Activated CD8-positive, alpha-beta T cell treated with anti-CD3 and anti-CD28 coated beads for 36 hours (primary cell): ENCODE measurements at regions of chr18 and their contacts with region 1.

Region 1: GRCh38 chr18:31555971-31556747 is 35.5 kb upstream of the TTR start:
- DNase-seq: peak; percentile 49
- ATAC-seq: peak; percentile 58
- H3K4me3 Mint-ChIP-seq: no peak overlapping the region
- H3K27ac Mint-ChIP-seq: no peak overlapping the region
- H3K4me1 Mint-ChIP-seq: no peaks in the 10 kb centered on the region
- H3K27me3 Mint-ChIP-seq: peaks cover 3% of the 10 kb centered on the region
- CTCF ChIP-seq: peak; percentile 80

Region 2: DNA sequence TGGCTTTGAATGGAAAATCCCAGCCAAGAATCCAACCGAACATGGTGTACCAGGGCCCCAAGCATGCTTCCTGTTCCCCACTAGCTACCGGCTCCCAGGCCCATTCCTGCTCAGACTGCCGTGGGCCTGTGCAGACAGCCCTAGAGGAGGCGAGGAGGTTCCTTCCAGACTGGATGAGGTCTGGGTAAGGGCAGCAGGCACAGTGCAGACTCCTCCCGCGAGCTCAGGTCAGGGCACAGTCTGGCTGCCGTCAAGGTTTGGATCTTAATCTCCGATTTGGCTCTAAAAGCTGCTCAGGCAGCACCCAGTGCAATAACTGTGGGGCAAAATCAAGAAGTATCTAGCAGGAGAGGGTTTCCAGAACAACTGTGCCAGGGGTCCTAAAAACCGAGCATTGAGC is 16.2 kb after region 1 on chr18:
- CTCF ChIA-PET with region 1: interaction called, 15 read pairs
- POLR2A ChIA-PET with region 1: no interaction called
- intact Hi-C with region 1: no loop called
- DNase-seq: no peak
- ATAC-seq: no peak
- H3K4me3 Mint-ChIP-seq: no peak overlapping the region
- H3K27ac Mint-ChIP-seq: no peak overlapping the region
- H3K4me1 Mint-ChIP-seq: no peaks in the 10 kb centered on the region
- H3K27me3 Mint-ChIP-seq: no peaks in the 10 kb centered on the region
- CTCF ChIP-seq: no peak

Region 3: DNA sequence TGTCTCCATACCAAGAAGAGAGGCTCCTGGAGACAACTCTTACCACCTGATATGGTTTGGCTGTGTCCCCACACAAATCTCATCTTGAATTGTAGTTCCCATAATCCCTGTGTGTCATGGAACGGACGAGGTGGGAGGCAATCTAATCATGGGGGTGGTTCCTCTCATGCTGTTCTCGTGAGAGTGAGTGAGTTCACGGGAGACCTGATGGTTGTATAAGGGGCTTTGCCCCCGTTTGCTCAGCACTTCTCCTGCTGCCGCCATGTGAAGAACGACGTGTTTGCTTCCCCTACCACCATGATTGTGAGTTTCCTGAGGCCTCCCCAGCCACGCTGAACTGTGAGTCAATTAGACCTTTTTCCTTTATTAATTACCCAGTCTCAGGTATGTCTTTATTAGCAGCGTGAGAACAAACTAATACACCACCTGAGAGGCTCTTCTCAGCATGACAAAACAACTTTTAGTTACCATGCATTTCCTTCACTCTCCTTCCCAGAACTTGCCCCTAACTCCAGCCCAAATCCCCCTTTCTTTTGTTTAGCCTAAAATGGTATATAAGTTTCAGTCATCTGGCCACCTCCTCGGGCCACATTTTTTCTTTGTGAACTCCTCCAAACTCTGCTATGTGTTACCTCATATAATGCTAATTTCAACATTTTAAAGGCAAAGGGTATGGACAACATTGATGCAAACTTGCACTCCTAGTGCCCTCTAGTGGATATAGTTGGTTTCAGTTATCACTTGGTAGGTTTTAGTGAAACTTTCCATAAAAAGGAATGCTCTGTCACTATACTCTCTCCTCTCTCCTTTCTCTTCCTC is 263.2 kb after region 1 on chr18:
- CTCF ChIA-PET with region 1: interaction called, 4 read pairs
- POLR2A ChIA-PET with region 1: no interaction called
- intact Hi-C with region 1: loop called (anchors 5 kb)
- DNase-seq: no peak
- ATAC-seq: no peak
- H3K4me3 Mint-ChIP-seq: no peak overlapping the region
- H3K27ac Mint-ChIP-seq: no peak overlapping the region
- H3K4me1 Mint-ChIP-seq: no peaks in the 10 kb centered on the region
- H3K27me3 Mint-ChIP-seq: no peaks in the 10 kb centered on the region
- CTCF ChIP-seq: peak; percentile 83